Heart right ventricle (tissue), 16 donors: ENCODE measurements at regions of chr12 and their contacts with region 1.

Region 1: DNA sequence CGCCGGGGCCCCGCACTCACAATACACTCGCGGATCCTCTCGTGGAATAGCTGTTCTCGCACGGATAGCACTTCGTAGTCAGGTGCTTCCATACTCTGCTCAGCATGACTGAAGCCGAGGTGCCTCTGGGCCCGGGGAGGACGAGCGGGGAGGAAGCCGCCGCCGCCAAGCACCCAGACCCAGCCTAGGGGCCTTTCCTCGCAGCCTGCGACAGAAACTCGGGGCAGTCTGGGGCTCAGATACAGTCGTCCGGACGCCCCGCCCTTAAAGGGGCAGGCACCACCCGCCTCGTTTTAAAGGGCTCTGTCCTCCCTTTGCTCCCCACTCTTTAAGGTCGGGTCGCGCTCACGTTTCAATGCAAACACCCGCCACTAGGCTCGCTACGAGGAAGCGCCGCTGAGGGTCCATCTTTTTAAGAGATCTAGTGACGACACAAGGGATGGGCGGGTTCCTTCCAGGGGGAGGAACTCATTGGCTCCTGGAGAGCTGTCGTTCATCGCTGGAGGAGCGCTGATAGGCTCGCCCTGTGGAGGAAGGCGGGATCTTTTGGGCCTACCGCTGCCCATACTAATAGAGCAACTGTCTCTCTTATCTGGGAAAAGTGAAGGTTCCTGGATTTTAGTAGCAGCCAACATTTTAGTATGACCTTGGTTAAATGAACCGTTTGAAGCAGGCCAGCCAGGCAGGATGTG is at the start of gene LMBR1L:
- DNase-seq: peak; percentile 92 to 98
- ATAC-seq: peak; percentile 96 to 98 (median 97)
- H3K4me3 ChIP-seq: peak within 1 kb of the TSS; percentile 67 to 100 (median 93)
- H3K27ac ChIP-seq: peak within 1 kb of the TSS; percentile 93 to 100 (median 98)
- H3K4me1 ChIP-seq: peaks cover 11 to 51% (median 47%) of the 10 kb centered on the region in 9 donors
- H3K27me3 ChIP-seq: no peaks in the 10 kb centered on the region
- CTCF ChIP-seq: peak in 8 of 9 donors; percentile 37 to 64 (median 53)
- total RNA-seq, gene LMBR1L: 21.5 to 51.8 (median 30.8) TPM

Region 2: DNA sequence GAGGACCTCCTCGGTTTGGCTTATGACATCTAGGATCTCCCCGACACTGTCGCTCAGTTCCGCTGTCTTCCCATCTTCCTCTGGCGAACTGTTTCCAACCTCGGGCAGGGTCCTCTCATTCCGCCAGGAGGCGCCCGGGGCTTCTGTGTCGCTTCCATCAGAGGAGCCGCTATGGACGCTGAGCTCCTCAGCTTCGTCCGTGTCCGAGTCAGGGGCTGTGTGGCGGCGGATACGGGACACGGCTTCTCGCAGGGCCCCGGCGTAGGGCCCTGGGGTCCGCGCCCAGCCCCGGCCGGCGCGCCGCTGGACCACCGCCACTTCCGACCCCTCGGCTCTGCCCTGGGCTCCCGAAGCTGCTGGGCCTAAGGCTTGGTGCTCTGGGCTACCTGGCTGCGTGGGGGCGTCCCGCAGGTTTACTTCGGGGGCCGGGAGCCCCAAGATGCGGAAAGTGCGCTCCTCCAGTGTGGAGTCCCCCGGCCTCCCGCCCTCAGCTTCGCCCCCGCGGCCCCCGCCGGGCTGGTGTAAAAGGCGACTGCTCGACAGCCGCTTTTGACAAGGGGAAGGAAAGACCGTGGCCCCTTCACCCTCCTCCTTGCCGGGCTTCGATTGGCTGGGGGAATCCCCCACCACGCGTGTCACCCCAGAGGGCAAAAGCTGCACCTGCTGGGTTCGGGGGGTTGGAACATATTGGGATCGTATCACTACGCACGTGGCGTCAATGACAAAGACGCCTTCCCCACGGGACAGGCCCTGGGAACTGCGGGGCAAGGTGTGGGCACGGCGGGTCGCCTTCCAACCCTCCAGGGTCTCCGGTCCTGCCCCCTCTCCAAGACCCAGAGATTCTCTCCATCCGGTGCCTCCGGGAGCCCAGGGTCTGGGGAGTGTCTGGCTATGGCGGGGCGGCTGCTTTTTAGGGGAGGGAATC is 113.6 kb before region 1 on chr12:
- intact Hi-C with region 1: no loop called
- DNase-seq: peak; percentile 78 to 79
- ATAC-seq: peak; percentile 46 to 80 (median 72)
- H3K4me3 ChIP-seq: peak overlapping the region in 9 of 10 donors; percentile 34 to 56 (median 54)
- H3K27ac ChIP-seq: peak overlapping the region in 1 of 10 donors; percentile 39
- H3K4me1 ChIP-seq: peaks cover 13 to 64% (median 42%) of the 10 kb centered on the region in 9 donors
- H3K27me3 ChIP-seq: peaks cover 4 to 92% (median 54%) of the 10 kb centered on the region in 7 donors
- CTCF ChIP-seq: peak; percentile 58 to 90 (median 78)

Region 3: DNA sequence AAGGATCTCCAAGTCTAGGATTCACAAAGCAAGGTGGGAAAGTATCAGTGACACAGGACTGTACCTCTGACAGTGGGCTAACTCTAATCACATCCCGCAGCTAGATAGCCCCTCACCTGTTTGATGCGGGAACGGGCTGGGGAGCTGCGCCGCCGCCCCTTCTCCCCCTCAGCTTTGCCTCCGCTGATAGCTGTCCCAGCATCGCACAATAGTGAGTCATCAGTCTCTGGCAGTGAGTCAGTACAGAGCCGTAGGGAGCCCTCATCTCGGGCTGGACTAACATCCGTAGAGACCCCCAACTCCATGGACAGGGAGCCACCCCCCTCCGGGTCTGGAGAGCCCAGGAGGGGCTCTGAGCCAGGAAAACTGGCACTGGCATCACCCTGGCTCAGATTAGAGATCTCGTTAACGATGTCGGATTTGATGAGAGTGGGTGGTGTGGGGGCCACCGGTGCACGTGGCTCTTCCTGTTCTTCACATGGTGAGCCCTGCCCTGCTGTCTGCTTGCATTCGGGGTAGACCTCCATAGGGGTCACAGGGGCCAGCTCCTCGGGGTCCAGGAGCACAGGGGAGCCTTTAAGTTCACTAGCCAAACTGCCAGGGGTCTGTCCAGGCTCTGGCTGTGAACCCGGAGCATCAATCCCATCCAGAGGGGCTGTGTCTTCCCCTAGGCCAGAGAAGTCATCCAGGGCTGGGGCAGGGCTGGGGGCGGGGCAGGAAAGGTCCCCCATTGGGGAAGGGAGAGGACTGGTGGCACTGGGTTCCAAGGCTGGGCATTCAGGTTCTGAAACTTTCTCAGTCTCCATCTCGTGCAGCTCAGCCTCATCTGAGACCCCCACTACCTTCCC is 60.8 kb before region 1 on chr12:
- intact Hi-C with region 1: no loop called
- DNase-seq: no peak
- ATAC-seq: peak in 1 of 8 donors; percentile 12
- H3K4me3 ChIP-seq: no peak overlapping the region
- H3K27ac ChIP-seq: no peak overlapping the region
- H3K4me1 ChIP-seq: peaks cover 0 to 9% (median 1%) of the 10 kb centered on the region in 9 donors
- H3K27me3 ChIP-seq: no peaks in the 10 kb centered on the region
- CTCF ChIP-seq: no peak

Region 4: DNA sequence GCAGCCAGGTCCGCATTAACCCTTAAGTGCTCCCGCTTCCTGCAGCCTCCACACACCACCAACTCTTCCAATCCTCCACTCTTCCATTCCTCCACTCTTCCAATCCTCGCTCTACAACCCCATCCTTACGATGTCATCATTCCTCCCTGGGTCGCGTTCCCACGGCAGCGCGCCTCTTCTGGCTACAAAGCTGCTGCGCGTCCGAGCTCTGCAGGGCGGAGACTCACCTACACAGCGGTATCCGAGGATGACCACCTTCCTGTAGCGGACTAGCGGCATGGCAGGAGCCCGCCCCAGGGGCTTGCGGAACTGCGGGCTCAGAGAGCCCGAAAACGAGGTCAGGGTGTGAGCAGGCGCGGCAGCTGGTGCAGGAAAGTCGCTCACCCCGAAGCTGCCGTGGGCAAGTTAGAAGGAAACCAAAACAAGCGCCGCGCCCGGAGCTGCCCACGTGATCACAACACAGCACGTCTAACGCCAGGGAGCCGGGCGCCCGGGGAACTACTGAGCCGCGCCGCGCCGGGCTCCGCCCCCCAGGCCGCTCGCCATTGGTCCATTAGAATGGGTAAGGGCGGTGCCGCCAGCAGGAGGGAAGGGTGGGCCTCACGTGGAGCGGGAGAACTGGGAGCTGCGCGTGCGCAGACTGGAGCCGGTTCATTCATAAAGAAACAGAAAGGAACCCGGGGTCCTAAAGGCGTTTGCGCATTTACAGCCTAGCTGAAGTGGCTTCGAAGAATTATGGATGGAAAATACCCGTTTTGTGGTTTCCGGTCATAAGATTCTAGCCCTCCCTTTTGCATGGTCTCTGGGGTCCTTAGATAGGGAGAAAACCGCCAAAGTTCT is 40.9 kb before region 1 on chr12 and contains the start of gene RHEBL1:
- intact Hi-C with region 1: loop called in 2 of 10 experiments (anchors 5 kb)
- DNase-seq: peak; percentile 97 to 99
- ATAC-seq: peak; percentile 100
- H3K4me3 ChIP-seq: peak within 1 kb of the TSS; percentile 51 to 86 (median 68)
- H3K27ac ChIP-seq: peak within 1 kb of the TSS in 7 of 10 donors; percentile 30 to 74 (median 59)
- H3K4me1 ChIP-seq: peaks cover 7 to 18% (median 12%) of the 10 kb centered on the region in 9 donors
- H3K27me3 ChIP-seq: no peaks in the 10 kb centered on the region
- CTCF ChIP-seq: no peak
- total RNA-seq, gene RHEBL1: 0.23 to 1.9 (median 0.41) TPM in 8 of 10 donors, not detected in the others

Region 5: DNA sequence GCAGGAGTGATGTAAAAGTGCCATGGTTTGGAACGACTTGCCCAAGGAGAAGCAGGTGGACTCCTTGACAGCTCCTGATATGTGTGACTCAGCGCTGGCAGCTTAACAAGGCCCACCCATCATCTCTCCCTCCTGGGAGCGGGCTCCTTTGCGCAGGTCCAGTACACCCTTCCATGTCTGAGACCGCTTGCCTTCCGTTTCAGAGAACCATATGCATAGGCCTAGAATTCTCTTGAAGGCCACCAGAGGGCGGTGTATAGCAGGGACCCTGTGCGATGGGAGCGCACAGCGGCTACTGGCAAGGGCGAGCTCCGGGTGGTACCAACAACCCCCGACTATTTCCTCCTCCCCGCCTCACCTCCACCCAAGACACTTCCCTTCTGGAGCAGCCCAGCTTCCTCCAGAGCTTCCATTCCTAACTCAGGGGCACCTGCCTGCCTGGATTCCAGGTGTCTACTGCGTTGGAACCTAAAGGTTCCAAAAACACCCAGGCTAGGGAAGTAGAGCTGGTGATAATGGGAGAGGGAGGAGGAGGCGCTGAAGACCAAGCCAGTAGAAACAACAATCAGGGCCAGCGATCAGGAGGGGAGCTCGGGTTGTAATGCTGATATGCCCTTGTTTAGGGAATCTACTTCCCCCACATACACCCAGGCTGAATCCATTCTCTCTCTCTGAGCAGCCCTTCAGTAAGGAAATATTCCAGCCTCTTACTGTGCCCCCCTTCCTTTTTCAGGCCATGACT is 22.2 kb before region 1 on chr12:
- intact Hi-C with region 1: loop called in 1 of 10 experiments (anchors 2 kb)
- DNase-seq: peak; percentile 61 to 81
- ATAC-seq: peak; percentile 86 to 92 (median 90)
- H3K4me3 ChIP-seq: peak overlapping the region in 5 of 10 donors; percentile 13 to 24 (median 16)
- H3K27ac ChIP-seq: no peak overlapping the region
- H3K4me1 ChIP-seq: peaks cover 26 to 56% (median 51%) of the 10 kb centered on the region in 9 donors
- H3K27me3 ChIP-seq: peaks cover 7 to 51% (median 41%) of the 10 kb centered on the region in 7 donors
- CTCF ChIP-seq: peak; percentile 85 to 95 (median 92)

Region 6: DNA sequence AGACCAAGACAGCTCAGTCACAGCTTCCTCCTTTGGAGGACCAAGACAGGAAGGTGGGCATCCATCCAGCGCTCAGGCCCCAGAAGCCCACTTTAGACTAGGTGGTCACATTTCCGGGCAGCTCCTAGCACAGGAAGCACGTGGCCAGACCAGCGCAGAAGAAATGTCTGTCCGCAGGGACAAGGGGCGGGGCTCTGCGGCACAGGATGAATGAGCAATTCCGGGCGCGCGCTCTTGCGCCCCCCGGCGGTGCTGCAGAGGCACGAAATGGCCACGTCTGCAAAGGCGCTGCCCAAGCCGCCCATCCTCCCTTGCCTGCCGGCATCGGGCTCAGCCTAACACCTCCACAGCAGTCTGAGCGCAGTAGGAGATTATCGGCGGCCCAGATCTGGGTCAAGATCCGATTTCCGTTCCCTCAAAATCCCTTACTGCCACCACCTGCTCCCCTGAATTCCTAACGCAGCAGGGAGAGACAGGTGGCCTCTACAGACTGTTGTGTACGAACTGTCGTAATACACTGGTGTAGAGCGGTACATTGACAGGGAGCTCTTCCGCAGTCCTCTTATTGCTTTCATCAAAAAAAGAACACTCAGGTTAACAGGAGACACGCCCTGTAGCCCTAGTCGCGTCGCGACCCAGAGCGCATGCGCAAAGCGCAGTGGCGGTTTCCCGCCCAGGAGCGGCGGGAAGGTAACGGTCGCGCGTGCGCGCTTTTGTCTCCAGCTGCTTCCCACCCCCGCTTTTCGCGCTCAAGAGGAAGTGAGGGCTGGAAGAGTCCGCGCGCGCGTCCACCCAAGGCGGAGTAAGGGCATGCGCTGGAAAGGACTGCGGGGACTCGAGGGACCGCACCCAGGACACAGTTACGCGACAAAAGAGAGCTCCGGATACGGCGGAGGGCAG is 19.8 kb after region 1 on chr12:
- intact Hi-C with region 1: loop called in 3 of 10 experiments (anchors 1 kb)
- DNase-seq: peak; percentile 95
- ATAC-seq: peak; percentile 86 to 94 (median 90)
- H3K4me3 ChIP-seq: peak overlapping the region; percentile 66 to 98 (median 86)
- H3K27ac ChIP-seq: peak overlapping the region; percentile 94 to 100 (median 99)
- H3K4me1 ChIP-seq: peaks cover 4 to 42% (median 31%) of the 10 kb centered on the region in 9 donors
- H3K27me3 ChIP-seq: no peaks in the 10 kb centered on the region
- CTCF ChIP-seq: peak; percentile 74 to 98 (median 93)